Activated CD4-positive, alpha-beta T cell treated with anti-CD3 and anti-CD28 coated beads for 36 hours (primary cell): ENCODE measurements at regions of chr14 and their contacts with region 1.

Region 1: DNA sequence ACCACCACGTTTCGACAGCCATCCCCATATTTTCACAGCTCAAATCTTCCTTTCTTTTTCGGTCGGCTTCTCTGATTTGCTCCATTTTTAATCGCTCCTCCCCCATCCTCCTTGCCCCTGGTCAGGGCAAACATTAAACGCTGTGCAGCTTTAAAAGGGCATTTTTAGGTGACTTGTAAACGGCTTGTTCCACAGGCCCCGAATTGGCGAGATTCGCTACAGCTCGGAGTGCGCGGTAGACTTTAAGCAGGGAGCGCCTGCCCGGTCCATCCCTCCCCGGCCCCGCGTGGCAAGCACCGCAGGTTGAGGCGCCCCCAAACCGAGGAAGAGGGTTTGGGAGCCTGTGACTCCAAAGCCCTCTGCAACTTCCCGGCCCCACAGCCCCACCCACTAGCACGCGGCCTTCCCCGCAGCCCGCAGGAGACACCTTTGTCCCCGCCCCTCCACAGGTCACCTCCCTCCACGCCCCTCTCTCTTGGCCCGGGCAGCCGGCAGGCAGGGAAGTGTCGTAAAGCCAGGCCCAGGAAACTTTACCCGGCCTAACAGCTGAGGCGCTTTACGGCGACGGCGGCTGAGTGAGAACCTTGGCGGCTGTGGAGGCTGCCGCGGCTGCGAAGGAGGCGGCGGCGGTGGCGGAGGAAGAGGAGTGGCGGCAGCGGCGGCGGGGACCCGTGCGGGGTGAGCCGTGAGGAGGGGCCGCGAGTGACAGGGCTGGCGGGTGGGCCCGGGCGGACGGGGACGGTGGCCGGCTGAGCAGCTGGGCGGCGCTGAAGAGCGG is at the start of gene NAA30:
- DNase-seq: peak; percentile 96
- ATAC-seq: peak; percentile 91
- H3K4me3 Mint-ChIP-seq: peak within 1 kb of the TSS; percentile 81
- H3K27ac Mint-ChIP-seq: peak within 1 kb of the TSS; percentile 93
- H3K4me1 Mint-ChIP-seq: peaks cover 37% of the 10 kb centered on the region
- H3K27me3 Mint-ChIP-seq: no peaks in the 10 kb centered on the region
- total RNA-seq, gene NAA30: 14.2 to 17.6 TPM

Region 2: DNA sequence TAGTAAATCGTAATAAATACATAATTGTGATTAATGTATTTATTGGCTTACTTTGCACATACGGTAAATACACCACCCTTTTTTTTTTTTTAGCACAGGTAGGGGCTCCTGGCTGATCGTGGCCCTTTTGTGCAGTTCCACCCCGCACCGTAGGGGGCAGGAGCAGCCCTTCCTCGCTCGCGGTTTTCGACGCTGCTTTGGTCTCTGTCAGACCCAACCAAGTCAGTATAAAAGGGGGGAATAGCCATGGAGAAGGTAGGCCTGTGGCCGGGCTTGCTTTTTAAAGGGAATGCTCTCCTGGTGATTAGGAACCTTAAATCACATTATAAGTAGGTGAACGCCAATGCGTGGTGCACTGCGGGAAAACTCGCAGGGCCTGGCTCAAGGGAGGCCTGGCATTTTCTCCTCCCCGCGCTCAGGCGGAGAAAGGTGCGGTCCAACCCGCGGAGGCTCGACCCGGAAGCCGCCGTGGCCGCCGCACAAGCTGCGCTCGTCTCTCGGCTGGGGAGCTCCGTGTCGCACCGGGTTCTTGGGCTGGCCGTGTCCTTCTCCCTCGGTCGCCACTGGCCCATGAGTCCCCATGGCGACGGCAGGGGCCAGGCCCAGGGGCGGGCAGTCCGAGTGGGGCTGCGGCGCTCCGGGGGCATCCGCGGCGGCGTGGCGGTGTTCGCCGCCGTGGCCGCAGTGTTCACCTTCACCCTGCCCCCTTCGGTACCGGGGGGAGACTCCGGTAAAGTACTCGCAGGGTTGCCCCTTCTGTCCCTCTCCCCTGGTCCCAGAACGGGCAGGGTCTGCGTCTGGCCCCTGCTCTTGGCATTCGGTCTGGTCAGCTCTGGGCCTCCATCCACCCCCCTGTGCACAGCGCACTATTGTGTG is 810.6 kb before region 1 on chr14 and contains the start of gene TMEM260:
- CTCF ChIA-PET with region 1: no interaction called
- POLR2A ChIA-PET with region 1: no interaction called
- intact Hi-C with region 1: loop called in 1 of 2 experiments (anchors 2 kb)
- DNase-seq: peak; percentile 93
- ATAC-seq: peak; percentile 89
- H3K4me3 Mint-ChIP-seq: peak within 1 kb of the TSS; percentile 82
- H3K27ac Mint-ChIP-seq: peak within 1 kb of the TSS; percentile 95
- H3K4me1 Mint-ChIP-seq: peaks cover 33% of the 10 kb centered on the region
- H3K27me3 Mint-ChIP-seq: no peaks in the 10 kb centered on the region
- total RNA-seq, gene TMEM260: 15.2 to 17.9 TPM

Region 3: DNA sequence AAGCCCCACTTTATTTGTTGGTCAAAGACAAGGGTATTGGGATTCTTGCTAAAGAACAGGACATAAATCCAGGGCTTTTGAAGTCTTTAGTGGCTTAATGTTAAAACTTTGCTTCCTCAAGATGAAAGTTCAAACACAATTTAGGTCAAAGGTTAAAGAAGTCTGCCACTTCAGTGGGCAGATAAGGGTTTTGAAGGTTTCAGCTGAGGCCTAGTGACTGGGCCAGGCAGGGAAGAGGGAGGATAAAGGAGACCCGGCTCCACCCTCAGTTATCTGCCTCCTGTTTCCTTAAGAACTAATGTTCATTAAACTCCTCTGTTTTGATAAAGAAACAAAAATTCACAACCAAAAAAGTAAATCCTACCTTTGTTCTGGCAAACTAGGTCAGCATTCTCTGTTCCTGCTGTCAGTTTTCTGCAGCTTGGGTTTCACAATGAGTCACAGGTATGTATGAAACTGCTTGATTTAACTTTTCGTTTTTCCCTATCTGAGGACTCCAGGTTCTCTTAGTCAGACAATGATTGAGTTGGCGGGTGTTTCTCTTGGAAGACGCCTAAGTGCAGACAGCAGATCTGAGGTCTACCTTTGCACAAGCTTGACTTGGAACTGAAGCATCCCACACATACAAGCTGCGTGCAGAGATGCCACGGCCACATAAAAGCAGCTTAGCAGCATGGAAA is 329.8 kb before region 1 on chr14:
- CTCF ChIA-PET with region 1: no interaction called
- POLR2A ChIA-PET with region 1: no interaction called
- intact Hi-C with region 1: loop called in 1 of 2 experiments (anchors 1 kb)
- DNase-seq: peak; percentile 62
- ATAC-seq: peak; percentile 94
- H3K4me3 Mint-ChIP-seq: no peak overlapping the region
- H3K27ac Mint-ChIP-seq: peak overlapping the region; percentile 35
- H3K4me1 Mint-ChIP-seq: peaks cover 23% of the 10 kb centered on the region
- H3K27me3 Mint-ChIP-seq: peaks cover 12% of the 10 kb centered on the region

Region 4: DNA sequence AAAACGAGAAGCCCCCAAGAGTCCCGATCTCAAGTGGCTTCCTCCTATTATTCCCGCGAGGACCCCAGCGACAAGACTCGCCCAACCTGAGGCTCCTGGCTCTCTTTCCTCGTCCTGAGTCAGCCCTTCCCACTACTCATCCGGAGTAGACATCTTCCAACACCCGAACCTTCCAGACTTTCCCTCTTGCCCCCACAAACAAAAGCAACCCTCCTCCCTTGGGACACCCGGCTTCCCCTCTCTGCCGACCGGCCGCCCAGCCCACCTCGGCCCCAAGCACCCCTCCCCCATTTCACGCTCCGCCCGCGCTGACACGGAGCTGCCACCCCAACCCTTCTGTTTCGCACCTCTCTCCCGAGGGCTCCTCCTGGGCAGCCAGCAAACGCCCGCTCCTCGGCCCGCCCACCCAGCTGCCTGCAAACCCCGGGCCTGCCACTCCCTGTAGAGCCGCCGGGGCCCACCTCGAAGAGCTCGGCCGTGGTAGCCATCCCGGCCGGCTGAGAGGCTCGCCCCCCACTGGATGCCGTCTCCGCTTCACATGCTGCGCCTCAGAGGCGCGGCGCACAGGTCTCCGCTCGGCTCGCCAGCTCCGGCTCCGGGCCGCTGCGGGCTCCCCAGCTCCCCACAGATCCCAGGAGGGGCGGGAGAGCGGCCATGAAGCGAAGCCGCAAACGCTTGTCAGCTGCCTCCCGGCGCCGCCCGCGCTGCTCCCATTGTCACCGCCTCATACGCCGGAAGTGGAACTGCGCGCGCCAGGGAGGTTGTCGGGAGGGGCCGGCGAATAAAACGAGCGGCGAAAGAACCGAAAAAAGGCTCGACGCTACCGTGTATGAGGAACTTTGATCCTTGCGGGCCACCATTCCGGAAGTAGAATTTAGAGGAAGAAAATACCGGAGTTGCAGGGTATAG is 121.8 kb before region 1 on chr14 and contains the starts of genes AP5M1 and EXOC5:
- CTCF ChIA-PET with region 1: no interaction called
- POLR2A ChIA-PET with region 1: interaction called, 4 read pairs
- intact Hi-C with region 1: loop called (anchors 1 kb)
- DNase-seq: peak; percentile 96
- ATAC-seq: peak; percentile 93
- H3K4me3 Mint-ChIP-seq: peak within 1 kb of the TSS; percentile 90
- H3K27ac Mint-ChIP-seq: peak within 1 kb of the TSS; percentile 99
- H3K4me1 Mint-ChIP-seq: peaks cover 53% of the 10 kb centered on the region
- H3K27me3 Mint-ChIP-seq: no peaks in the 10 kb centered on the region
- total RNA-seq, gene AP5M1: 30.8 to 32.7 TPM
- total RNA-seq, gene EXOC5: 66.5 to 80.2 TPM

Region 5: GRCh38 chr14:57502586-57503254 is 112.5 kb after region 1 on chr14:
- CTCF ChIA-PET with region 1: no interaction called
- POLR2A ChIA-PET with region 1: no interaction called
- intact Hi-C with region 1: no loop called
- DNase-seq: no peak
- ATAC-seq: no peak
- H3K4me3 Mint-ChIP-seq: no peak overlapping the region
- H3K27ac Mint-ChIP-seq: no peak overlapping the region
- H3K4me1 Mint-ChIP-seq: no peaks in the 10 kb centered on the region
- H3K27me3 Mint-ChIP-seq: no peaks in the 10 kb centered on the region

Region 6: DNA sequence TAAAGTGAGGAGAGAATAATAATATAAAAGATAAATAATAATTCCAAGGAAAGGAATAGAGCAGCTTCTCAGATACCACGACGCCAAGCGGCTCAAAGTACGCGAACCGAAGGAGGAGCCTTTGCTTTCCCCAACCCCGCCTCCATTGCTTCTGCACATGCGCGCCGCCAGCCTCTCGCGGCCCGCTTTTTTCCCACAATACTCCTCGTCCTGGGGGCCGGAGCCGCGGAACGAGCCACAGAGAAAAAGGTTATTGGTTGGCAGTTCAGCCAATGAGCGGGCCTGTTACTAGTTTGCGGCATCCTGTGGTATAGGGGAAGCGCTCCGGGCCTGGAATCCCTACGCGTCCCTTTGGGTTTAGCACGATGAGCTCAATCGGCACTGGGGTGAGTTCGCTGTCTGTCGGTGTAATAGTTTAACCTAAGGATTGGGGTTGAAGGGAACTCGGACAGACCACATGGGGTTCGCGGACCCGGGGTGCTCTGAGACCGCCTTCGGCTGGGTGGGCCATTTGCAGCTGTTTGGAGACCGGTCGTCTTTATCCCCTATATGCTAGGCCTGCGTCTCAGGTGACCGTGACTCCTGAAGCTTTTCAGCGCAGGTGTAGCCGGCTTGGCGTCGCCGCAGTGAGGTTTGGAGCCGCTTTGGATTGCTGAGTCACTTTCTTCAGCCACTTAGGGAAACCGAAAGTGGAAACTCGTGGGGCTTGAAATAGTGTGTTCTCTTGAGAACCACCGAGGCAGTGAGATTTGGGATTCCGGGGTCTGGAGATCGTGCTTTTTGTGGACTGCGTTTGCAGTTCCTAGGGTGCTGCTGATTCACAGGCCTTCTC is 854.6 kb after region 1 on chr14 and contains the start of gene PSMA3:
- CTCF ChIA-PET with region 1: no interaction called
- POLR2A ChIA-PET with region 1: no interaction called
- intact Hi-C with region 1: loop called in 1 of 2 experiments (anchors 2 kb)
- DNase-seq: peak; percentile 98
- ATAC-seq: peak; percentile 93
- H3K4me3 Mint-ChIP-seq: peak within 1 kb of the TSS; percentile 96
- H3K27ac Mint-ChIP-seq: peak within 1 kb of the TSS; percentile 96
- H3K4me1 Mint-ChIP-seq: peaks cover 40% of the 10 kb centered on the region
- H3K27me3 Mint-ChIP-seq: no peaks in the 10 kb centered on the region
- total RNA-seq, gene PSMA3: 342 to 425 TPM